Panc1 (cell line): ENCODE measurements at regions of chr4 and their contacts with region 1.

Region 1: GRCh38 chr4:67167849-67168248 is 377.5 kb downstream of the CENPC start:
- DNase-seq: no peak
- ATAC-seq: no peak
- H3K4me3 ChIP-seq: no peak overlapping the region
- H3K27ac ChIP-seq: no peak overlapping the region
- H3K4me1 ChIP-seq: no peaks in the 10 kb centered on the region
- H3K27me3 ChIP-seq: no peaks in the 10 kb centered on the region
- CTCF ChIP-seq: no peak

Region 2: GRCh38 chr4:66795724-66796123 is 372.1 kb before region 1 on chr4:
- CTCF ChIA-PET with region 1: no interaction called
- POLR2A ChIA-PET with region 1: no interaction called
- in situ Hi-C with region 1: no loop called
- intact Hi-C with region 1: no loop called
- DNase-seq: no peak
- ATAC-seq: no peak
- H3K4me3 ChIP-seq: no peak overlapping the region
- H3K27ac ChIP-seq: no peak overlapping the region
- H3K4me1 ChIP-seq: no peaks in the 10 kb centered on the region
- H3K27me3 ChIP-seq: no peaks in the 10 kb centered on the region
- CTCF ChIP-seq: no peak

Region 3: GRCh38 chr4:66929748-66930147 is 238.1 kb before region 1 on chr4:
- CTCF ChIA-PET with region 1: no interaction called
- POLR2A ChIA-PET with region 1: interaction called, 13 read pairs
- in situ Hi-C with region 1: no loop called
- intact Hi-C with region 1: no loop called
- DNase-seq: no peak
- ATAC-seq: no peak
- H3K4me3 ChIP-seq: no peak overlapping the region
- H3K27ac ChIP-seq: no peak overlapping the region
- H3K4me1 ChIP-seq: no peaks in the 10 kb centered on the region
- H3K27me3 ChIP-seq: no peaks in the 10 kb centered on the region
- CTCF ChIP-seq: no peak

Region 4: DNA sequence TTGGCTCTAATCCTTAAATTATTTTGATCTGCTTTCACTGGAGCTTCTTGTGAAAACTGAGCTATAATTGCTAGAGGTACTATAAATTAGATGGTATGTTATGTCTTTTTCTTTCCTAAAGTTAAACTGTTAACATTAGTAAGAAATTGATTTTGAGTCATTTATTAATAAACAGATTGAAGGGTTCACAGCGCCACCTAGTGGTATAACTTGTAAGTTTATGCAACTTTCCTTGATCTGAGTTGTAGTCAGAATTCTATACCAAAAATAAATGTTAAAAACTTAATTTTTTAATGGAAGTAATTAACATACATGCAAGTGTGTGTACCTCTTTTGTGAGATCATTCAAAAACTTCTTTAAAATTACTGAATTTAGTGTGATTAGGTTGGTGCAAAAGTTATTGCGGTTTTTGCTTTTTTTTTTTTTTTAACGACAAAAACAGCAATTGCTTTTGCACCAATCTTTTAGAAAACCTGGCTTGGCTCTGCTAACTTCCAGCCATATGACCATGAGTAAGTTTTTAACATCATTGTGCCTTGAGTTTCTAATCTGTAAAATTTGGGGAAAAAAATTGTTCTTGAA is 225.9 kb after region 1 on chr4:
- CTCF ChIA-PET with region 1: no interaction called
- POLR2A ChIA-PET with region 1: no interaction called
- in situ Hi-C with region 1: no loop called
- intact Hi-C with region 1: no loop called
- DNase-seq: no peak
- ATAC-seq: no peak
- H3K4me3 ChIP-seq: no peak overlapping the region
- H3K27ac ChIP-seq: no peak overlapping the region
- H3K4me1 ChIP-seq: no peaks in the 10 kb centered on the region
- H3K27me3 ChIP-seq: no peaks in the 10 kb centered on the region
- CTCF ChIP-seq: peak; percentile 38; the same call in 1 of the 2 replicates